ENCODE measurements at regions of chr4 and their contacts with region 1.

Region 1: DNA sequence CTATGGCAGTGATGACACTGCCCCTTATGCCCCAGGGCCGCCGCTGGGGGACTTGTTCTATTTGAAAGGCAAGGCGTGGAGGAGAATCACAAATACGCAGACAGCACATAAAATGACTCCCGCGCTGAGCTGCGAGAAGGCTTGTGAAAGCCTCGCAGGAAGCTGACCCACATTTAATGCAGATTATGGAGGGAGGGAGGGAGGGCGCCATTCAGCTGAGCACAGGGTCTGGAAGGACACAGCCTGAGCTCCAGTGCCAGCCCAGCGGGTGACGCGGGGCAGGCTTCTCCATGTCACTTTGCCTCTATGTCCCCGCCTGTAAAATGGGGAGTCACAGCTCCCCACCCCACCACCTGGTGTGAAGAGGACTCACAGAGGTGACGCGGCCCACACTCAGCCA is 14.3 kb downstream of the ABLIM2 start:
- DNase-seq: no peak

Region 2: DNA sequence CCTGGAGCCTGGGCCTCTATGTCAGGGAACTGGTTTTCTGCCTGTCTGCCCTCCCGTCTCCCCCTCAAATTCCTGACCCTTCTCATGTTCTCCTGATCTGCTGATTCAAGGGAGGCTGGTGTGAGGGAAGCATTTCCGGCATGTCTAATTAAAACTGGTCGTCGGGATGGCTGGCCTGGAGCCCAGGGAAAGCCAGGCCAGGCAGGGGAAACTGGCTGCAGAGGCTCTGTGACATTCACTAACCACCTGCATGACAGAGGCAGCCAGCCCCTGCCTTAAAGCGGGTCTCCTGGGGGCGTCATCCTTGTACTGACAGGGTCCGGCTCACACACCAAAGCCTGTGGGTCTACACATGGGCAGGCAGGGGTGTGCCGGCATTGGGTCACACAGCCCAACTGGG is 21.0 kb before region 1 on chr4:
- intact Hi-C with region 1: loop called (anchors 2 kb)
- DNase-seq: no peak

Region 3: GRCh38 chr4:8192748-8193738 is 48.7 kb after region 1 on chr4:
- intact Hi-C with region 1: loop called (anchors 2 kb)
- DNase-seq: no peak

Region 4: DNA sequence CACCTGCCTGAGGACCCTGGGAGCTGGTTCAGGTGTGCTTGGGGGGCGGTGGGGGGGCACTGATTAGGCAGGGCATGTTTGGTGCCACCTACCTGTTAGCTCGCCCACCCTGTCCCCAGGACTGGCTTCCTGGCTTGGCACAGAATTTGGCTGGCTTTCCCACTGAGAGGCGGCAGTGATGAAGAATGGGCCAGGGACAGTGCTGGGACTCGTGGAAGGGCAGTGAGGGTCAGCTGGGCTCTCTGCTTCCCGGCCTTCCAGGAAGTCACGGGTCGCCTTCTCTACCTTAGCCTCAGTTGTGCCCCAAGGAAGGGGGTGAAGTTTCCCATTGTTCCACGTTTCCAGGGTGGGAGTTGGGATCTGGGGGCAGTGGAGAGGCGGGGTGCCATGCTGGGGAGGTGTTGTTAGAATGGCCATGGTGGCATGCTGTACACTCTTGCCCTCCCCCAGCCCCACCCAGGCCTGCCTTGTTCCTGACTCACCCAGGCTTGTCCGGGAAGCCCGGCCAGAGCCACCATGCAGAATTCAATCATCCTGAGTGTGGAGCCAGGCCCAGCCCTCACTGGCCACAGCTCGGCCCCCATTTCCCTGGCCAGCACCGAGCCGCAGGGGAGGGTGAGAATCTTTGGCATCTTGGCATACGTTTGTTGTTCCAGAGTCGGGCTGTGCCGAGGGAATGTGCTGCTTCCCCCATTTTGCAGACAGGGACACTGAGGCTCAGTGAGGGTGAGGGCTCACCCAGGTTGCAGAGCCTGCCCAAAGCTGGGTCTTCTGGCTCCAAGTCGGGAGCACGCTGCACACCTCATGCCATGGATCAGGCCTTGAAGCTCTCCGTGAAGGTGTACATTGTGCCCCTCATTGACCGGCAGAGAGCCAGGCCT is 414.0 kb after region 1 on chr4:
- intact Hi-C with region 1: no loop called
- DNase-seq: no peak

Measured in cardiac septum (tissue), 1 donor.